Naive thymus-derived CD4-positive, alpha-beta T cell (primary cell): ENCODE measurements at regions of chr5 and their contacts with region 1.

Region 1: DNA sequence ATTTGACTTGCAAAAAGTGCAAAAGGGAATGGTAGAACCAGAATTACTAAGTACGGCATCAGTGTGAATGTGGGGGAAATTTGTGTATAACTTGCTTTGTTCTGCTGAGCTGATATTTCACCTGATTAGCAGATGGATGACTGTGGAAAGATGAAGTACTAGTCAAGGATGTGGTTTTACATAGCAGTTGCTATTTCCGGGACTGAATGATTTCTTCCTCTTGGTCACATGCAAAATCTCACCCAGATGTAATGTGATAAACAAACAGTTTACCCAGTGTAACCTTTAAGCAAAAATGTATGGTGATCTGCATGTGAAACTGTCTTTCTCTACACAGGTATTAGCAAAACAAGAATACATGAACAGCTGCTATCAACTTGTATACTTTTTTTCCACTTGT is 46.1 kb downstream of the DCP2 start:
- DNase-seq: peak in 7 of 9 donors; percentile 56 to 86 (median 77)
- ATAC-seq: peak; percentile 95
- H3K4me3 ChIP-seq: peak overlapping the region; percentile 1
- H3K4me3 Mint-ChIP-seq: peak overlapping the region; percentile 5 to 78 (median 70)
- H3K27ac ChIP-seq: peak overlapping the region; percentile 12
- H3K27ac Mint-ChIP-seq: peak overlapping the region; percentile 74 to 94 (median 87)
- H3K4me1 ChIP-seq: peaks cover 36 to 47% of the 10 kb centered on the region in 2 donors
- H3K4me1 Mint-ChIP-seq: peaks cover 24 to 79% (median 68%) of the 10 kb centered on the region in 7 donors
- H3K27me3 ChIP-seq: no peaks in the 10 kb centered on the region
- H3K27me3 Mint-ChIP-seq: no peaks in the 10 kb centered on the region

Region 2: GRCh38 chr5:113068559-113068958 is 45.9 kb after region 1 on chr5:
- CTCF ChIA-PET with region 1: no interaction called
- POLR2A ChIA-PET with region 1: interaction called, 5 read pairs
- intact Hi-C with region 1: loop called in 1 of 2 experiments (anchors 5 kb)
- DNase-seq: no peak
- ATAC-seq: no peak
- H3K4me3 ChIP-seq: no peak overlapping the region
- H3K4me3 Mint-ChIP-seq: no peak overlapping the region
- H3K27ac ChIP-seq: no peak overlapping the region
- H3K27ac Mint-ChIP-seq: no peak overlapping the region
- H3K4me1 ChIP-seq: peaks cover 0 to 5% of the 10 kb centered on the region in 2 donors
- H3K4me1 Mint-ChIP-seq: peaks cover 0 to 48% (median 22%) of the 10 kb centered on the region in 7 donors
- H3K27me3 ChIP-seq: no peaks in the 10 kb centered on the region
- H3K27me3 Mint-ChIP-seq: no peaks in the 10 kb centered on the region

Region 3: GRCh38 chr5:113294311-113295110 is 271.9 kb after region 1 on chr5:
- CTCF ChIA-PET with region 1: no interaction called
- POLR2A ChIA-PET with region 1: no interaction called
- intact Hi-C with region 1: loop called in 1 of 2 experiments (anchors 1 kb)
- DNase-seq: peak; percentile 30 to 72 (median 62)
- ATAC-seq: peak; percentile 92
- H3K4me3 ChIP-seq: peak overlapping the region; percentile 64
- H3K4me3 Mint-ChIP-seq: peak overlapping the region; percentile 88 to 96 (median 92)
- H3K27ac ChIP-seq: peak overlapping the region; percentile 43
- H3K27ac Mint-ChIP-seq: peak overlapping the region in 6 of 9 donors; percentile 21 to 86 (median 46)
- H3K4me1 ChIP-seq: peaks cover 8 to 11% of the 10 kb centered on the region in 2 donors
- H3K4me1 Mint-ChIP-seq: peaks cover 13 to 28% (median 21%) of the 10 kb centered on the region in 7 donors
- H3K27me3 ChIP-seq: no peaks in the 10 kb centered on the region
- H3K27me3 Mint-ChIP-seq: peaks cover 30 to 82% (median 59%) of the 10 kb centered on the region in 5 donors

Region 4: GRCh38 chr5:113371721-113372196 is 349.1 kb after region 1 on chr5:
- CTCF ChIA-PET with region 1: no interaction called
- POLR2A ChIA-PET with region 1: no interaction called
- intact Hi-C with region 1: no loop called
- DNase-seq: no peak
- ATAC-seq: no peak
- H3K4me3 ChIP-seq: no peak overlapping the region
- H3K4me3 Mint-ChIP-seq: no peak overlapping the region
- H3K27ac ChIP-seq: no peak overlapping the region
- H3K27ac Mint-ChIP-seq: no peak overlapping the region
- H3K4me1 ChIP-seq: peaks cover 0 to under 1% of the 10 kb centered on the region in 2 donors
- H3K4me1 Mint-ChIP-seq: peaks cover 4 to 19% (median 16%) of the 10 kb centered on the region in 7 donors
- H3K27me3 ChIP-seq: no peaks in the 10 kb centered on the region
- H3K27me3 Mint-ChIP-seq: peaks cover 0 to 59% (median 6%) of the 10 kb centered on the region in 5 donors